Natural killer cell (primary cell): ENCODE measurements at regions of chr4 and their contacts with region 1.

Region 1: DNA sequence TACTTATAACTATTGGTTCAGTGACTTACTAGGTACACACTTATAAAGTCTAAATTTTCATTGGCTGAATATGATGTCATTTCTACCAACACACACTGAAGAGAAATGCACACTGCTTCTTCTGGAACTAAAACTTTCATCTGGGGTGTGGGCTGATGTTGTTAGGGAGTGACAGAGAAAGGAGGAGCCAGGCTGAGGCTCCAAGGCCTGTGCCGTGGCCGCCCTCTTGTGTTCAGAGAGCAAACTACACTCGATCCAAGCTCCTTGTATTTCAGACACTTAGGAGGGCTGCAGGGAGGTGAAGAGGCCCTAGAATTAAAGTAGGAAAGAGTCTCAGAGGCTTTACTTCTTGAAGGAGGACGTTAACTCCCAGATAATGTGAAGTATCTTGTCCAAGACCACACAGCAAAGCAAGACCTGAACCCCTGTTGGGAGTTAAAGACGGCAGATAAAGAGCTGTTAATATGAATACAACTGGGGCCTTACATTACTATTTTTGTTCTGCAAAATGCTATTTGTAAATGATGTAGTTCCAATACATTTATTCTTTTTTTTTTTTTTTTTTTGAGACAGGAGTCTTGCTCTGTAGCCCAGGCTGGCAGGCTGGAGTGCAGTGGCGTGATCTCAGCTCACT is 137.5 kb downstream of the AFAP1 start:
- DNase-seq: peak; percentile 69 to 86
- ATAC-seq: peak; percentile 83 to 98 (median 94)
- H3K4me3 ChIP-seq: no peak overlapping the region
- H3K4me3 Mint-ChIP-seq: no peak overlapping the region
- H3K27ac ChIP-seq: no peak overlapping the region
- H3K27ac Mint-ChIP-seq: no peak overlapping the region
- H3K4me1 ChIP-seq: no peaks in the 10 kb centered on the region
- H3K4me1 Mint-ChIP-seq: peaks cover 6% of the 10 kb centered on the region in 2 donors
- H3K27me3 ChIP-seq: no peaks in the 10 kb centered on the region
- H3K27me3 Mint-ChIP-seq: peaks cover 0 to 19% of the 10 kb centered on the region in 2 donors
- CTCF ChIP-seq: peak; percentile 81

Region 2: GRCh38 chr4:7546809-7547367 is 255.3 kb before region 1 on chr4:
- intact Hi-C with region 1: no loop called
- DNase-seq: no peak
- ATAC-seq: no peak
- H3K4me3 ChIP-seq: no peak overlapping the region
- H3K4me3 Mint-ChIP-seq: no peak overlapping the region
- H3K27ac ChIP-seq: no peak overlapping the region
- H3K27ac Mint-ChIP-seq: no peak overlapping the region
- H3K4me1 ChIP-seq: no peaks in the 10 kb centered on the region
- H3K4me1 Mint-ChIP-seq: peaks cover 0 to 13% of the 10 kb centered on the region in 2 donors
- H3K27me3 ChIP-seq: no peaks in the 10 kb centered on the region
- H3K27me3 Mint-ChIP-seq: peaks cover 0 to 5% of the 10 kb centered on the region in 2 donors
- CTCF ChIP-seq: no peak

Region 3: GRCh38 chr4:7761720-7762119 is 40.5 kb before region 1 on chr4:
- intact Hi-C with region 1: loop called (anchors 5 kb)
- DNase-seq: peak; percentile 27 to 76
- ATAC-seq: peak; percentile 57 to 83 (median 80)
- H3K4me3 ChIP-seq: no peak overlapping the region
- H3K4me3 Mint-ChIP-seq: no peak overlapping the region
- H3K27ac ChIP-seq: no peak overlapping the region
- H3K27ac Mint-ChIP-seq: no peak overlapping the region
- H3K4me1 ChIP-seq: peaks cover 16% of the 10 kb centered on the region
- H3K4me1 Mint-ChIP-seq: peaks cover 11 to 19% of the 10 kb centered on the region in 2 donors
- H3K27me3 ChIP-seq: no peaks in the 10 kb centered on the region
- H3K27me3 Mint-ChIP-seq: no peaks in the 10 kb centered on the region
- CTCF ChIP-seq: peak; percentile 64

Region 4: GRCh38 chr4:7785017-7785416 is 17.2 kb before region 1 on chr4:
- intact Hi-C with region 1: no loop called
- DNase-seq: no peak
- ATAC-seq: no peak
- H3K4me3 ChIP-seq: no peak overlapping the region
- H3K4me3 Mint-ChIP-seq: no peak overlapping the region
- H3K27ac ChIP-seq: no peak overlapping the region
- H3K27ac Mint-ChIP-seq: no peak overlapping the region
- H3K4me1 ChIP-seq: peaks cover 10% of the 10 kb centered on the region
- H3K4me1 Mint-ChIP-seq: peaks cover 22 to 30% of the 10 kb centered on the region in 2 donors
- H3K27me3 ChIP-seq: no peaks in the 10 kb centered on the region
- H3K27me3 Mint-ChIP-seq: peaks cover 2 to 6% of the 10 kb centered on the region in 2 donors
- CTCF ChIP-seq: no peak

Region 5: DNA sequence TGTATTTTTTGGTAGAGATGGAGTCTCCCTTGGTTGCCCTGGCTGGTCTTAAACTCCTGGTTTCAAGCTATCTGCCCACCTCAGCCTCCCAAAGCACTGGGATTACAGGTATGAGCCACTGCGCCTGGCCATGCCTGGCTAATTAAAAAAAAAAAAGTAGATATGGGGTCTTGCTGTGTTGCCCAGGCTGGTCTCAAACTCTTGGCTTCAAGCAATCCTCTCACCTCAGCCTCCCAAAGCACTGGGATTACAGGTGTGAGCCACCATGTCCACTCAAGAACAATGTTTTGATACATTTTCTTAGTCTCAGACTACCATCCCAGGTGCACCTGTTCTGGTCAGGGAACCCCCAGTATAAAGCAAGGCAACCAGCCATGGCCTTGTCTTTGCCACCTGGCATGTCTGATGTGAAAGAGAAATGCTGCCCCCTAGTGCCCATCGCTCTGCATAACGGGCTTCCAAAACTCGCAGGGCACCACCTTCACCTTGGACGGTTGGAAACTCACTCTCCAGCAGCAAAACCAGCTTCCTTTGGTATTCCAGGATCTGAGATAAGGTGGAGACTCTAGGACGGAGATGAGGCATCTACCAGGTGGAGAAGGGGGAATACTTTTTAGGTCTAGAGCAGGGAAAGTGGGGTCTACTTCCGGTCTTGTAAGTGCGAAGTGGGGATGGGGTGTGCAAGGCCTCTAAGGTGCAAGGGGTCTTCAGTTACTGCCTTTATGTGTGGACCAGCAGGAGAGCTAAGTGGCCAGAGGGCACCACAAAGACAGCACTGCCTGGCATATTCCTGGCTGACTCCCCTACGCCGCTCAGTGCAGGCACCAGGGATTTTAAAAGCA is 185.2 kb after region 1 on chr4:
- intact Hi-C with region 1: loop called (anchors 1 kb)
- DNase-seq: peak; percentile 74 to 89
- ATAC-seq: peak; percentile 72 to 94 (median 89)
- H3K4me3 ChIP-seq: no peak overlapping the region
- H3K4me3 Mint-ChIP-seq: no peak overlapping the region
- H3K27ac ChIP-seq: no peak overlapping the region
- H3K27ac Mint-ChIP-seq: no peak overlapping the region
- H3K4me1 ChIP-seq: peaks cover 12% of the 10 kb centered on the region
- H3K4me1 Mint-ChIP-seq: peaks cover 6 to 15% of the 10 kb centered on the region in 2 donors
- H3K27me3 ChIP-seq: no peaks in the 10 kb centered on the region
- H3K27me3 Mint-ChIP-seq: peaks cover 6 to 7% of the 10 kb centered on the region in 2 donors
- CTCF ChIP-seq: peak; percentile 88

Region 6: DNA sequence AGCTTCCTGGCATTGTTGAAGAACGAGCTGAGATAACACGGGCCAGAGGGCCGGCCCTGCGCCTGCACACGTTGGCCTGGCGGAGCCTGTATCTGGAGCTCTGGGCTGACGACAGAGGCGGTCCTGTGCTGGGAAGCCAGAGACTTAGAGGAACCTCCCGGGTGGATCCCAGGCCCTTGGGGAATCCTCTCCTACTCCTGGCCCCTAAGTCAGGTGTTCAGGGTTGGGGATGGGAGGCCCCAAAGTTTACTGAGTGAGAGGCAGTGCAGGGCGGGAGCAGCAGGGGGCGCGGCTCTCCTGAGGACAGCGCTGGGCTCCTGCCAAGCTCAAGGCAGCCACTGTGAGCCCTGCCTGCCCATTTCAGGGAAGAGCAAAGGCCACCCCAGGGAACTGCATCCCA is 464.9 kb after region 1 on chr4:
- intact Hi-C with region 1: no loop called
- DNase-seq: peak in 1 of 2 donors; percentile 9
- ATAC-seq: peak in 1 of 3 donors; percentile 52
- H3K4me3 ChIP-seq: no peak overlapping the region
- H3K4me3 Mint-ChIP-seq: no peak overlapping the region
- H3K27ac ChIP-seq: no peak overlapping the region
- H3K27ac Mint-ChIP-seq: no peak overlapping the region
- H3K4me1 ChIP-seq: peaks cover 2% of the 10 kb centered on the region
- H3K4me1 Mint-ChIP-seq: no peaks in the 10 kb centered on the region
- H3K27me3 ChIP-seq: peaks cover 5% of the 10 kb centered on the region
- H3K27me3 Mint-ChIP-seq: peaks cover 23 to 25% of the 10 kb centered on the region in 2 donors
- CTCF ChIP-seq: peak; percentile 20